Heart right ventricle (tissue), 16 donors: ENCODE measurements at regions of chr10 and their contacts with region 1.

Region 1: DNA sequence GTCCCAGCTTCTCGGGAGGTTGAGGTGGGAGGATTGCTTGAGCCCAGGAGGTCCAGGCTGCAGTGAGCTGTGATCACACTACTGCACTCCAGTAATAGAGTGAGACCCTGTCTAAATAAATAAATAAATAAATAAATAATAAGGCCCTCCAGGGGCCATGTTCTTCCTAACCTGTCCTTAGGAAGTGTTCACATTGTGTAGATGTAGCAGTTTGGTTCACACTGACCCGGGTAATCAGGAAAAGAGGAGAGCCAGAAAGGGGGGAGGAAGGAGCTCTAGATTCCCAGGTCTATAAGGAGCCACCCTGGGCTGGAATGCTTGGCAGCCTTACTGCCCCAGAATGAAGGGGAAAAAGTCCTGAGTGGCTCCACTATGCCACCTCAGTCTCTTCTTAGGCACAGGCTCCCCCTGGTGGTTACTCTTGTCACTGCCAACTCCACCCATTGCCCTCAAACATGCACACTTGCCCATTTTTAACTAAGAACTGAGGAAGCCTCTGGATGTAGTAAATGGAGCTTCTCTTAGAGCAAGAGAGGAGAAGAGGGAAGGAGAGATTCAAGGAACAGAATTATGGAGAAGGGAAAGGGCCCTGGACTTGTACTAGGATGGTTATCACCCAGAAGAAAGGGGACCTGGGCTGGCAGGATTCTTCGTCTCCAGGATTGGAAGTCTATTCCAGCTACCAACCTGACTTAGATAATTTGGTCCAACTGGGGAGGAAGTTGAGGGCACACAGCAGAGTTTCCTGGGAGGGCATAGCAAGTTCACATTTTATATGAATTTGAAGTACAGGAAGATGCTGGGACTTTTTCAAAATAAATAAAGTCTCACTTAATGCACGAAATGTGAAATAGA is 7.8 kb downstream of the HPS6 start:
- DNase-seq: peak; percentile 70 to 83
- ATAC-seq: peak; percentile 78 to 90 (median 83)
- H3K4me3 ChIP-seq: no peak overlapping the region
- H3K27ac ChIP-seq: no peak overlapping the region
- H3K4me1 ChIP-seq: peaks cover 2 to 22% (median 12%) of the 10 kb centered on the region in 9 donors
- H3K27me3 ChIP-seq: no peaks in the 10 kb centered on the region
- CTCF ChIP-seq: peak; percentile 79 to 99 (median 92)

Region 2: DNA sequence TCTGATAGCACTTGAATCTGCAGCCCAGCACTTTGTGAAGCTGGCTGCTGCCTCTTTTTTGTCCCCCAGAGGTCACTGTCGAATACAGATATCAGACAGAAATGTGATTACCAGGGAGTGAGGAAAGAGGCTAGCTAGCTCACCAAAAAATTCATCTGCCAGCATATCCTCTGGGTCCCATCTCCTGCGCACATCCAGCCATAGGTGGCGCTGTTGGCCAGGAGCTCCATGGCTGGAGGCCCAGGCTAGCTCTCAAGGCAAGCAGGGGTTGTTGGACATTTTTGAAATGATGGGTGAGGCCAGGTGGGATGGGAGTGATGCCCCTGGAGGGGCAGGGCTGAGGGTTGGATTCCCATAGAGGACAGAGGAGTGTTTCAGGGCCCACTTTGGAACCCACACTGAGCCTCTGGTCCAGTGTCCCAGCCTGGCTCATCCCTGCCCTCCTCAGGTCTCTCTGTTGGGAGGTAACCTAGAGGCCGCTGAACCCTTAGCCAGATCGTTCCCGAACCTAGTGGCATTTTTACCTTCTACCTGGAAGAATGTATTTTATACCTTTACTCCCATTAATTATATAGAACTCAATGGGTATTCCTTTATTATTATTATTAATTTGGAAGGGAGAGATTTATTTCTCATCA is 470.0 kb before region 1 on chr10:
- intact Hi-C with region 1: loop called in 4 of 10 experiments (anchors 5 to 10 kb)
- DNase-seq: peak; percentile 19 to 75
- ATAC-seq: peak; percentile 73 to 90 (median 84)
- H3K4me3 ChIP-seq: no peak overlapping the region
- H3K27ac ChIP-seq: no peak overlapping the region
- H3K4me1 ChIP-seq: peaks cover 0 to 16% (median 5%) of the 10 kb centered on the region in 9 donors
- H3K27me3 ChIP-seq: no peaks in the 10 kb centered on the region
- CTCF ChIP-seq: peak; percentile 69 to 89 (median 85)

Region 3: DNA sequence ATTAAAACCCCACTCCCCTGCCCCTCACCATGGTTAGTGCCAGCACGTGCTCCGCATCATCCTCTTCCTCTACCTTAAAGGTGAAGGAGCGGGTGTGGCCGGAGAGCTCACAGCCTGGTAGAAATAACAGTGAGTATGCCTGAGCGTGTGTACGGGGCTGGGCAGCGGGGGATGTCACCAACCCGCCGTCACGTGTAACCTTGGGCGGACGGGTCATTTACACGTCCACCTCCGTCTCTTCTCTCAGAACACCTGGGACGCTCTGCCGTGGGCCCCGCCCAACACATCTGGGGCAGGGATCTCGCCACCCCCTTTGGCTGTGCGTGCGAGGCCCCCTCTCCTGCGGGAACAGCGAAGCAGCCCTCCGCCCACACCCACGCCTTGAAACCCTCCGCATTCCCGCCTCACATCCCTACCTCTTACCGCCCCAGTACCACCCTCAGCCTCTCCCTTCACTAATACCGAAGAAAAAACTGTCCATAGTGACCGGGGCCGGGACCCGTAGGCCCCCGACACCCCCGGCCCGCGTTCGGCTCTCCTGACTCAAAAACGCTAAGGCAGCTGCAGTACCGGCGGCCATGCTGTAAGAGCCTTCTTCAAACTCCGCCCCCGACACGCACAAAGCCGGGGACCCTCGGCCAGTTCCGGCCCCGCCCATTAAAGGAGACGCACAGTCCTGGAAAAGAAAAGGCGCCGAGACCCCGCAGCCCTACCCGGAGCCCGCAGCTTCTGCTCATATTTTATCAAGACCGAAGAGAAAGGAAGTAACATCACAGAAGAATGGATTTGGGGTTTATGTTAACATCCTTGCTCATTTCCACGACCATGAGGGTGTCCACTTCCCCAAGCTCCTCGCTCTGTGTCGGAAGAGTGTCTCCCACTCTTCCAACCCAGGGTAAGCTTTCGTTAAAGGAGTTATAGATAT is 289.8 kb before region 1 on chr10 and contains the start of gene NPM3:
- intact Hi-C with region 1: loop called in 1 of 10 experiments (anchors 1 kb)
- DNase-seq: peak; percentile 78 to 85
- ATAC-seq: peak; percentile 65 to 79 (median 74)
- H3K4me3 ChIP-seq: peak within 1 kb of the TSS; percentile 19 to 82 (median 71)
- H3K27ac ChIP-seq: peak within 1 kb of the TSS in 8 of 10 donors; percentile 35 to 75 (median 50)
- H3K4me1 ChIP-seq: peaks cover 11 to 66% (median 44%) of the 10 kb centered on the region in 9 donors
- H3K27me3 ChIP-seq: peaks cover 0 to 23% (median 9%) of the 10 kb centered on the region in 7 donors
- CTCF ChIP-seq: no peak
- total RNA-seq, gene NPM3: 4.9 to 12.1 (median 7.0) TPM

Region 4: DNA sequence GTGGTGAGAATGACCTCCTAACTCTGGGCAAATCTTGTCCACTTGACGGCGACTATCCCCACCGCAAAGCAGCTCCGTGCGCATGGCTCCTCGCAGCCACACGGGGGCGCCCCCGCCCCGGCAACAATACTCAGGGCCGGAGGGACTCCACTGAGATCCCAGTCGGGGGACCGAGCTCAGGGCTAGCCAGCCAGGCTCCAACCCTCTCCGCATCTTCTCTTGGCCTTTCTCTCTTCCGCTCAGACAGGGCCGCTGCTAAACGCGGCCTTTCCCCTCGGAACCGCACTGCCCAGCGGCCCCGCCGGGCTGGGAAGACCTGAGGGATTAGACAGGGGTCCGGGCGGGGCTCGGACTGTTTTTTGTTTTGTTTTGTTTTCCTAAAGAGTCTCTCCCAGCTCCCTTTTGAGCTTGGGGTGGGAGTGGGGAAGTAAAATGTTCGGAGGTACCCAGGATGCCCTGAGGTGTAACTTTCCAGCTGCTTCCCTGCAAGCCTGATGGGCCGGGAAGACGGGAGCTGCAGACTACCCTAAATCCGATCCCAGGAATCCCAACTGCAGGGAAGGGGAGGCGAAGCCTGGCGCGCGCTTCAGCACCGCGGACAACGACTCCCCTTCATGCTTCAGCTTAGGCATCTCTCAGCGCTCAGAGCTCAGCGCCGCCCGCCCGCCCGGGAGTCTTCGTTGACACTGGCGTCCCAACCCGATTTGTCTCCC is 232.0 kb before region 1 on chr10:
- intact Hi-C with region 1: loop called in 6 of 10 experiments (anchors 5 to 10 kb)
- DNase-seq: peak; percentile 80 to 84
- ATAC-seq: peak; percentile 70 to 92 (median 86)
- H3K4me3 ChIP-seq: peak overlapping the region in 9 of 10 donors; percentile 24 to 58 (median 43)
- H3K27ac ChIP-seq: peak overlapping the region in 2 of 10 donors; percentile 10 to 53
- H3K4me1 ChIP-seq: peaks cover 10 to 75% (median 45%) of the 10 kb centered on the region in 9 donors
- H3K27me3 ChIP-seq: no peaks in the 10 kb centered on the region
- CTCF ChIP-seq: peak; percentile 89 to 98 (median 90)

Region 5: GRCh38 chr10:101889256-101890210 is 183.4 kb before region 1 on chr10:
- intact Hi-C with region 1: loop called in 2 of 10 experiments (anchors 2 to 10 kb)
- DNase-seq: peak; percentile 62 to 79
- ATAC-seq: peak in 3 of 8 donors; percentile 52 to 60 (median 59)
- H3K4me3 ChIP-seq: no peak overlapping the region
- H3K27ac ChIP-seq: peak overlapping the region in 3 of 10 donors; percentile 43 to 59 (median 56)
- H3K4me1 ChIP-seq: peaks cover 0 to 63% (median 21%) of the 10 kb centered on the region in 9 donors
- H3K27me3 ChIP-seq: no peaks in the 10 kb centered on the region
- CTCF ChIP-seq: peak; percentile 46 to 83 (median 78)

Region 6: GRCh38 chr10:102024799-102025198 is 48.1 kb before region 1 on chr10:
- intact Hi-C with region 1: no loop called
- DNase-seq: no peak
- ATAC-seq: no peak
- H3K4me3 ChIP-seq: no peak overlapping the region
- H3K27ac ChIP-seq: peak overlapping the region in 1 of 10 donors; percentile 31
- H3K4me1 ChIP-seq: peaks cover 0 to 14% (median 0%) of the 10 kb centered on the region in 9 donors
- H3K27me3 ChIP-seq: no peaks in the 10 kb centered on the region
- CTCF ChIP-seq: no peak

Region 7: DNA sequence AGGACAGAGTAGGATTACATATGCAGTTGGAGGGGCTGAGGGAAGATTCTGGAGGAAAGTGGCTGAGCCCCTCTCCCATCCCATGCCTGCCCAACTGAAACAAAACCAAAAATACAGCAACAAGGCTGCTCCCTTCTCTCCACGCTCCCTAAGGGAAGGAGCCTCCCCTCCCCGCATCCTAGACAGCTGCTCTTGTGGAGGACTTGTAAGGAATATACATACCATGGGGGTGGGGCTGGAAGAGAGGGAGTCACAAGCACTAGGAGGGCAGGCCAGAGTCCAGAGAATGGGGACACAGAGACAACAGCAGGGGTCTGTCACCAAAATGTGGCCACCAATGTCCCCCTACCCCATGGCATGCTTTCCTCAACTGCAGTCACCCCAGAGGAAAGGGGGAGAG is 34.1 kb after region 1 on chr10:
- intact Hi-C with region 1: loop called in 3 of 10 experiments (anchors 5 kb)
- DNase-seq: no peak
- ATAC-seq: no peak
- H3K4me3 ChIP-seq: no peak overlapping the region
- H3K27ac ChIP-seq: no peak overlapping the region
- H3K4me1 ChIP-seq: peaks cover 0 to 6% (median 0%) of the 10 kb centered on the region in 9 donors
- H3K27me3 ChIP-seq: no peaks in the 10 kb centered on the region
- CTCF ChIP-seq: no peak

Region 8: DNA sequence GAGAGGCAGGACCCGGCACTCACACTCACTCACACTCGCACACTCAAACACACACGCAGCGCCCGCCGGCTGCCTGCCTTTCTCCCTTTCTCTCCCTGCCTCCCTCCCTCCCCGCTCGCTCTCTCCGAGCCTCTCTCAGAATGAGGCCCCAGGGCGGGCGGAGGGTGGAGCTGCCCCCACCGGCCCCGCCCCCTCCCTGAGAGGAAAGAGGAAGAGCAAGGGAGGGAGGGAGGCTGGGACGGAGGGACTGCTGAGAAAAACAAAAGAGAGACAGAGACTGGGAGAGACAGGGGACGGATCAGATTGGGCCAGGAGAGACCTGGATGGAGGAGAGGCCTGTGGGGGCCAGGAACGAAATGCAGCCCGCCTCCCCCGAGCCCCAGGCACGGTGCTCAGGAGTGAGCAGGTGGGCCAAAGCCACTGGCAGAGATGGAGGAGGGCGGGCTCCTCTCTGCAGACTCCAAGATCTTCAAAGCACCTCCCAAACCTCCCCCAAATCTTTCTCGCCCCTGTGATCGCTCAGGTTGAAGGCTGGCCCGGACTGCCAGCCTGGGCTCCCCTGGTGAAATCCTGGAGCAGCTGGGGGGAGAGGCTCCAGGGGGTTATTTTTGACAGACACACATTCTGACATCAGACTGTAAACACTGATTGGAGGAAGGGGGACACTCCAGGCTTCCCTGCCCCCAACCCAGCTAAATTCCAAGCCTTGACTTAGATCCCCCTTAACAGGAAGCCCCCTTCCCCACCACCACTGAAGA is 42.1 kb after region 1 on chr10:
- intact Hi-C with region 1: loop called in 3 of 10 experiments (anchors 5 kb)
- DNase-seq: peak; percentile 89 to 92
- ATAC-seq: peak; percentile 73 to 87 (median 80)
- H3K4me3 ChIP-seq: peak overlapping the region; percentile 54 to 99 (median 78)
- H3K27ac ChIP-seq: peak overlapping the region; percentile 21 to 100 (median 95)
- H3K4me1 ChIP-seq: peaks cover 23 to 78% (median 69%) of the 10 kb centered on the region in 9 donors
- H3K27me3 ChIP-seq: no peaks in the 10 kb centered on the region
- CTCF ChIP-seq: no peak